Body of pancreas (tissue), 4 donors: ENCODE measurements at regions of chr17 and their contacts with region 1.

Region 1: DNA sequence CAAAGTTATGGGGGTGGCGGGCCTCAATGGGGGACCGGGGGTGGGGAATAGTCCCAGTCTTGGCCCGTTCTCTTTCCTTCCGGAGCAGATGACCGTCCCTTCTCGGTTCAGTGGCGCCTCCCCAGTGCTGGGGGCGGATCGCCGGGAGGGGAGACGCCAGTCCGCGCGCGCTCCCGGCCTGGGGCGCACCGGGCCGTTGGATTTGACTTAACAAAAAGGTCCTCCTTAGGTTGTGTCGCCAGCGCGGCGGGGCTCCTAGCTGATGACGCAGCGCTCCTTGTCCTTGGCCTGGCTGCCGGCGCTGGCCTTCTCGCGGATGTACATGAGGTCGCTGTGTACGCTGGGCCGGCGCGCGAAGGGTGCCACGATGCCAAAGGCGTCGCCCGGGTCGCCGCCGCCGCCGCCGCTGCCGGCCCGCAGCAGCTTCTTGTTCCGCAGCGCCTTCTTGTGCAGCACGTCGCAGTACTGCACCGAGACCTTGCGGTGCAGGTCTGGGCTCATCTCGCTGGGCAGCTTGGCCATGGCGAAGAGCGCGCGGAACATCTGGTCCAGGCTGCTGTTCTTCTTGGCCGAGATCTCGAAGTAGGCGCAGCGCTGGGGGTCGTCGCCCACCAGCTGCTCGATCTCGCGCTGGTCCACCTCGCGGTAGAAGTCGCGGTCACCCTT is 1.2 kb downstream of the RASD1 start:
- DNase-seq: peak; percentile 37 to 61 (median 47)
- ATAC-seq: no peak
- H3K4me3 ChIP-seq: peak overlapping the region in 1 of 2 donors; percentile 36
- H3K27ac ChIP-seq: peak overlapping the region in 3 of 4 donors; percentile 6 to 86 (median 38)
- H3K4me1 ChIP-seq: peaks cover 27% of the 10 kb centered on the region
- H3K27me3 ChIP-seq: no peaks in the 10 kb centered on the region
- CTCF ChIP-seq: no peak
- POLR2A ChIP-seq: no peak

Region 2: GRCh38 chr17:17363638-17364337 is 131.2 kb before region 1 on chr17:
- intact Hi-C with region 1: loop called (anchors 5 kb)
- DNase-seq: peak in 1 of 4 donors; percentile 5
- ATAC-seq: no peak
- H3K4me3 ChIP-seq: no peak overlapping the region
- H3K27ac ChIP-seq: peak overlapping the region in 1 of 4 donors; percentile 38
- H3K4me1 ChIP-seq: peaks cover 5% of the 10 kb centered on the region
- H3K27me3 ChIP-seq: no peaks in the 10 kb centered on the region
- CTCF ChIP-seq: no peak
- POLR2A ChIP-seq: no peak